WTC11 (cell line): ENCODE measurements at regions of chr5 and their contacts with region 1.

Region 1: GRCh38 chr5:141512390-141512910 is 23.6 kb downstream of the PCDHGC5 start:
- DNase-seq: peak; percentile 99
- ATAC-seq: peak; percentile 82
- H3K4me3 Mint-ChIP-seq: peak overlapping the region; percentile 87
- H3K27ac Mint-ChIP-seq: no peak overlapping the region
- H3K4me1 Mint-ChIP-seq: peaks cover 61% of the 10 kb centered on the region
- H3K27me3 Mint-ChIP-seq: no peaks in the 10 kb centered on the region
- CTCF ChIP-seq: peak; percentile 99

Region 2: DNA sequence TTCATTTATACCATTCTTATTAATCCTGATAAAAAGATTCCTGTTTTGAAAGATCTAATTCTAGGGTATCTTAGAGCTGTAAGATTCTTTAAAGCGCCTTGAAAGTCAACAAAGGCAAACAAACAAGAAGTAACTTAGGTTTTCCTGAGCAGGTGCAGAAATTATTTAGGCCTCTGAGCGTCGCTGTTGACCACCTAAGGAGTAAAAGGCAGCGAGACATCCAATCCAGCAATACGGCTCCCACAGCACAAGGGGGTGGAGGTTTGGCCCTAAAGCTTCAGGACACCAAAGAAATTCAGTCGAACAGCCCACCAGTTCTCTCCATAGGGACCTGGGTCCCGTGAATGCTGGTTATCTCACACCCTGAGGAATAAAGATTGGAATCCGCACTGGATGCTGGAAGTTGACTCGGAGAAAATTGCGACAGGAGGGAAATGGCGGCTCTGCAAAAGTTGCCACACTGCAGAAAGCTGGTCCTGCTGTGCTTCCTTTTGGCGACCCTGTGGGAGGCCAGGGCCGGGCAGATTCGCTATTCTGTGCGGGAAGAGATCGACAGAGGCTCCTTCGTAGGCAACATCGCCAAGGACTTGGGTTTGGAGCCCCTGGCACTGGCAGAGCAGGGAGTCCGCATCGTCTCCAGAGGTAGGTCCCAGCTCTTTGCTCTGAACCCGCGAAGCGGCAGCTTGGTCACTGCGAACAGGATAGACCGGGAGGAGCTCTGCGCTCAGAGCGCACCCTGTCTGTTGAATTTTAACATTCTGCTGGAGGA is 173.7 kb before region 1 on chr5 and contains the start of gene PCDHGA2:
- CTCF ChIA-PET with region 1: interaction called, 12 read pairs
- POLR2A ChIA-PET with region 1: no interaction called
- DNase-seq: peak; percentile 60
- ATAC-seq: peak; percentile 78
- H3K4me3 Mint-ChIP-seq: peak within 1 kb of the TSS; percentile 30; the same call in 1 of the 2 replicates
- H3K27ac Mint-ChIP-seq: no peak within 1 kb of the TSS
- H3K4me1 Mint-ChIP-seq: peaks cover 1% of the 10 kb centered on the region; the same call in 1 of the 2 replicates
- H3K27me3 Mint-ChIP-seq: no peaks in the 10 kb centered on the region; the same call in 1 of the 2 replicates
- CTCF ChIP-seq: peak; percentile 30; the same call in 1 of the 2 replicates
- total RNA-seq, gene PCDHGA2: 0.66 to 0.96 TPM (median 0.94 TPM) in 3 replicates

Region 3: GRCh38 chr5:141420855-141421496 is 91.5 kb before region 1 on chr5 and contains the start of gene PCDHGA11:
- CTCF ChIA-PET with region 1: interaction called, 131 read pairs
- POLR2A ChIA-PET with region 1: interaction called, 5 read pairs
- DNase-seq: peak; percentile 77
- ATAC-seq: peak; percentile 52
- H3K4me3 Mint-ChIP-seq: peak within 1 kb of the TSS; percentile 81
- H3K27ac Mint-ChIP-seq: peak within 1 kb of the TSS; percentile 47
- H3K4me1 Mint-ChIP-seq: peaks cover 26% of the 10 kb centered on the region
- H3K27me3 Mint-ChIP-seq: peaks cover 14% of the 10 kb centered on the region
- CTCF ChIP-seq: peak; percentile 68
- total RNA-seq, gene PCDHGA11: 7.0 to 8.4 TPM (median 7.1 TPM) in 3 replicates

Region 4: DNA sequence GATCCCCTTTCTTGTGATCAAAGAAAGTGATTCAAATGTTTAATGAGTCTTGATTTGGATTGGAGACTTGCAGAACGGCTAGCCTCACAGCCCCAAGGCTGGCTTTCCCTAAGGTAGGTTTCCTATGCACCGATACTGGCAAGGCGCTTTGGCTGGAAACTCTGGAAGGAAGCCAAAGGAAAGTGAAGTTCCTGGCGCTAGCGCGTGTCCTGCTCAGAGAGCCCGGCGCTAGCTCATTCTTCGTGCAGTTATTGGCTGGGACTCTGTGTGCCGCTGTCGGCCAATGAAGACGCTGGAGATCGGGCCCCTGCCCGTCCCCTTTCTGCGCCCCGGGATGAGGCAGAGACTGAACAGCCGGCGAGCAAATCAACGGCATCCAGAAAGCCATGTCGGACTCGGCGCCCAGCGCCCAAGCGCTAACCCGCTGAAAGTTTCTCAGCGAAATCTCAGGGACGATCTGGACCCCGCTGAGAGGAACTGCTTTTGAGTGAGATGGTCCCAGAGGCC is 36.8 kb before region 1 on chr5 and contains the start of gene PCDHGC3:
- CTCF ChIA-PET with region 1: interaction called, 95 read pairs
- POLR2A ChIA-PET with region 1: interaction called, 7 read pairs
- DNase-seq: peak; percentile 92
- ATAC-seq: peak; percentile 96
- H3K4me3 Mint-ChIP-seq: peak within 1 kb of the TSS; percentile 92
- H3K27ac Mint-ChIP-seq: peak within 1 kb of the TSS; percentile 93
- H3K4me1 Mint-ChIP-seq: peaks cover 35% of the 10 kb centered on the region
- H3K27me3 Mint-ChIP-seq: peaks cover 28% of the 10 kb centered on the region
- CTCF ChIP-seq: no peak
- total RNA-seq, gene PCDHGC3: 28.1 to 29.4 TPM (median 29.1 TPM) in 3 replicates

Region 5: GRCh38 chr5:141492168-141492885 is 20.1 kb before region 1 on chr5:
- CTCF ChIA-PET with region 1: interaction called, 53 read pairs
- POLR2A ChIA-PET with region 1: interaction called, 5 read pairs
- DNase-seq: peak; percentile 49
- ATAC-seq: peak; percentile 10
- H3K4me3 Mint-ChIP-seq: peak overlapping the region; percentile 66
- H3K27ac Mint-ChIP-seq: no peak overlapping the region
- H3K4me1 Mint-ChIP-seq: peaks cover 57% of the 10 kb centered on the region
- H3K27me3 Mint-ChIP-seq: peaks cover 52% of the 10 kb centered on the region
- CTCF ChIP-seq: no peak

Region 6: DNA sequence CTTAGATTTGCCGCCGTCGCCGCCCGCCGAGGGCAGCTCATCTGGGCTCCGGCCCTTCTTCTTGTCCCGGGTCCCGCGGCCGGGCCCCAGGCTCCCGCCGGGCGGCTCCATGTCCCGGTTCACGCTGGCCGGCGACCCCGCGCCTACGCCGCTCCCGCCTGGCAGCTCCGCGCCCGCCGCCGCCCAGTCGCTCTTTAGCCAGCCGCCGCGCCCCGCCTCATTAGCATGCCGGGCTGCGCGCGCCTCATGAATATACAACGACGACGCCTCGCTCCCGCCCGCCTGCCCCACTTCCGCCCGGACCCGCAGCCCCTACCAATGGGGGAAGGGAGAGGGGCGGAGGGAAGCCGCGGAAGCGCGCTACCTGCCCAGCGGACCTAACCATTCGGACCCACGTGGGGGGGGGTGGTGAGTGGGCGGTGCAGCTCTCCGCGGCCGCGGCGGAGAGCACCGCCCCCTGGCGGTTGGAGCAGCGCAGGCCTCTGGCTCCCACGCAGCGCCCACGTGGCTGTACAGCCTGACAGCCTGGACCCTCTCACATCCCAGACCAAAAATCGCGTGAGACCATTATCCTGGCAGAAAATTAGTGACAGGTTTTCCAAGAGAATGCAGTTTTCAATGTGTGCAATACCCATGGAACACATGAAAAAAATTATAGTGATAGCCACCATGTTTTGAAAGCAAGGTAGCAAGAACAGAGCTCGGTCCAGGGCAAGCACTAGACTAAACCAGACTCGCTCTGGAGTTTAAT is 106.5 kb after region 1 on chr5 and contains the start of gene DIAPH1:
- CTCF ChIA-PET with region 1: interaction called, 12 read pairs
- POLR2A ChIA-PET with region 1: no interaction called
- DNase-seq: peak; percentile 97
- ATAC-seq: peak; percentile 94
- H3K4me3 Mint-ChIP-seq: peak within 1 kb of the TSS; percentile 95
- H3K27ac Mint-ChIP-seq: peak within 1 kb of the TSS; percentile 97
- H3K4me1 Mint-ChIP-seq: peaks cover 41% of the 10 kb centered on the region
- H3K27me3 Mint-ChIP-seq: no peaks in the 10 kb centered on the region; the same call in 1 of the 2 replicates
- CTCF ChIP-seq: peak; percentile 93
- total RNA-seq, gene DIAPH1: 90.9 to 109 TPM (median 96.0 TPM) in 3 replicates